Activated T-helper 1 cell treated with anti-CD3 and anti-CD28 coated beads, Interleukin-12 subunit alpha, Interleukin-12 subunit beta, Interleukin-2, Interleukin-4 antibody, amounts not matched to agents 30 ng/mL and 10 ng/mL and 1 ng/mL, durations not matched to agents 14 hours and 24 hours and 36 hours (primary cell): ENCODE measurements at regions of chr11 and their contacts with region 1.

Region 1: DNA sequence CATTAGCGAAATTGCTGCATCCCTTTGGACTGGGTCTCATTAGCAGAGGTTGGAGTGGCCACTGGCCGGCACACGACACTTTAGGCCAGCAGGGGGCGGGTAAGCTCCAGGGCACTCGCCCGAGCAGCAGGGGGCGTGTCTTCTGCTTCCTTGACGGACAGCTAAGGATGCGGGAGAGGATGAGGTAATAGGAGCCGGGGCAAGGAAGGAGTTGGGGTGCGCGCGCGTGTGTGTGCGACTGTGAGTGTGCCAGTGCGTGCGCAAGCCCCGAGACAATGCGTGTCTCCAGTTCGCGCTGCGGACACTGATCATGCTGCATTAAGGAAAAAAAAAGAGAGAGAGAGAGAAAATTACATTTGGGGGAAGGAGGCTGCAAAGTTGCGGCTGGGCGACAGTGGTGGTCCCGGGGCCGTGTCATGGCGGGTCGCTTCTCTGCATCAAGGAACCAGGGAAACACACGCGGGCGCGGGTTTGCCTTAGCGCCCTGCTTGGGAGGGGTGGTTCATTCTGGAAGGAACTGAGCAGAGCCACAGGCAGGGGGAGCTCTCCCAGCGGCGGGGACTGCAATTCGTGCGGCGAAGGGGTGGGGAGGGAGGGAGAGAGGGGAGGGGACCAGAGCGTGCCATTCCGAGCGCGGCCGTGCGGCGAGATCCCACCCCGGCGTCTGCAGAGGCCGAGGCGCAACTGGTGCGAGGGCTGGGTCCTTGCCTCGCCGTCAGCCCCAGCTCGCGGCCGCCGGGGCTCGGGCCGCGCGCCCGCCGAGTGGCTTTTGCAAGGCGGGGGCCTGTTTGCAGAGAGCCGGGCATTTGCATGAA is at the start of gene DTX4:
- DNase-seq: peak; percentile 84
- H3K4me3 Mint-ChIP-seq: peak within 1 kb of the TSS; percentile 85
- H3K27ac Mint-ChIP-seq: no peak within 1 kb of the TSS
- H3K4me1 Mint-ChIP-seq: peaks cover 8% of the 10 kb centered on the region
- H3K27me3 Mint-ChIP-seq: peaks cover 37% of the 10 kb centered on the region
- total RNA-seq, gene DTX4: 0.05 TPM in 2 replicates

Region 2: GRCh38 chr11:59106363-59107336 is 65.1 kb before region 1 on chr11 and contains the start of gene FAM111B:
- intact Hi-C with region 1: loop called (anchors 2 kb)
- DNase-seq: peak; percentile 73
- H3K4me3 Mint-ChIP-seq: peak within 1 kb of the TSS; percentile 93
- H3K27ac Mint-ChIP-seq: peak within 1 kb of the TSS; percentile 82
- H3K4me1 Mint-ChIP-seq: peaks cover 80% of the 10 kb centered on the region
- H3K27me3 Mint-ChIP-seq: no peaks in the 10 kb centered on the region
- total RNA-seq, gene FAM111B: 54.9 and 57.3 TPM in 2 replicates

Region 3: DNA sequence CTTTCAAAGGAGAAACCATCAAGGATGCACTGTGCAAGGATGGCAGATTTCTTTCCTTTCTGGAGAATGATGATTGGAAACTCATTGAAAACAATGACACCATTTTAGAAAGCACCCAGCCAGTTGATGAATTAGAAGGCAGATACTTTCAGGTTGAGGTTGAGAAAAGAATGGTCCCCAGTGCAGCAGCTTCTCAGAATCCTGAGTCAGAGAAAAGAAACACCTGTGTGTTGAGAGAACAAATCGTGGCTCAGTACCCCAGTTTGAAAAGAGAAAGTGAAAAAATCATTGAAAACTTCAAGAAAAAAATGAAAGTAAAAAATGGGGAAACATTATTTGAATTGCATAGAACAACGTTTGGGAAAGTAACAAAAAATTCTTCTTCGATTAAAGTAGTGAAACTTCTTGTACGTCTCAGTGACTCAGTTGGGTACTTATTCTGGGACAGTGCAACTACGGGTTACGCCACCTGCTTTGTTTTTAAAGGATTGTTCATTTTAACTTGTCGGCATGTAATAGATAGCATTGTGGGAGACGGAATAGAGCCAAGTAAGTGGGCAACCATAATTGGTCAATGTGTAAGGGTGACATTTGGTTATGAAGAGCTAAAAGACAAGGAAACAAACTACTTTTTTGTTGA is 19.3 kb before region 1 on chr11:
- intact Hi-C with region 1: loop called (anchors 1 kb)
- DNase-seq: no peak
- H3K4me3 Mint-ChIP-seq: peak overlapping the region; percentile 45
- H3K27ac Mint-ChIP-seq: peak overlapping the region; percentile 55
- H3K4me1 Mint-ChIP-seq: peaks cover 48% of the 10 kb centered on the region
- H3K27me3 Mint-ChIP-seq: no peaks in the 10 kb centered on the region

Region 4: DNA sequence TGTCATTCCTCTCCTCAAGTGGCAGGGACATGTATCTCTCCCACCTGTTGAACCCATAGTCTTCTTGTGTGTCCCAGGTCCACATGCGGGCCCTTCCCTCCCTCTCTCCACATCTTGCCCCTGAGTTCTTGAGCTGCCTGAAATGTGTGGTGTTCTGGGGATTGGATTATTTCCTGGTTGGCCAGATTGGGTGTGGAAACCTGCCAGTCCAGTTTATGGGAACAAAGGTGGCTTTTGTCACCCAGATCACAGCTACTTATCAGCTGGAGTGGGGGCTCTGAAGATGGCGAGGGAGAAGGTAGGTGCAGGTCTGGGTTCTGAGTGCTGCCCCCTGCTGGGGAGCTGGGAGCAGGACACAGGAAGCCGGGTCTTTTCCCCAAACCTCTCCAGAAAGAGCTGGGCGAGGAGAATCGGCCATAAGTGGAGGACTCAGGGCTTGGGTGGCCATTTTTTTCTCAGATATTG is 14.4 kb after region 1 on chr11:
- intact Hi-C with region 1: loop called (anchors 1 kb)
- DNase-seq: no peak
- H3K4me3 Mint-ChIP-seq: no peak overlapping the region
- H3K27ac Mint-ChIP-seq: no peak overlapping the region
- H3K4me1 Mint-ChIP-seq: no peaks in the 10 kb centered on the region
- H3K27me3 Mint-ChIP-seq: peaks cover 9% of the 10 kb centered on the region

Region 5: DNA sequence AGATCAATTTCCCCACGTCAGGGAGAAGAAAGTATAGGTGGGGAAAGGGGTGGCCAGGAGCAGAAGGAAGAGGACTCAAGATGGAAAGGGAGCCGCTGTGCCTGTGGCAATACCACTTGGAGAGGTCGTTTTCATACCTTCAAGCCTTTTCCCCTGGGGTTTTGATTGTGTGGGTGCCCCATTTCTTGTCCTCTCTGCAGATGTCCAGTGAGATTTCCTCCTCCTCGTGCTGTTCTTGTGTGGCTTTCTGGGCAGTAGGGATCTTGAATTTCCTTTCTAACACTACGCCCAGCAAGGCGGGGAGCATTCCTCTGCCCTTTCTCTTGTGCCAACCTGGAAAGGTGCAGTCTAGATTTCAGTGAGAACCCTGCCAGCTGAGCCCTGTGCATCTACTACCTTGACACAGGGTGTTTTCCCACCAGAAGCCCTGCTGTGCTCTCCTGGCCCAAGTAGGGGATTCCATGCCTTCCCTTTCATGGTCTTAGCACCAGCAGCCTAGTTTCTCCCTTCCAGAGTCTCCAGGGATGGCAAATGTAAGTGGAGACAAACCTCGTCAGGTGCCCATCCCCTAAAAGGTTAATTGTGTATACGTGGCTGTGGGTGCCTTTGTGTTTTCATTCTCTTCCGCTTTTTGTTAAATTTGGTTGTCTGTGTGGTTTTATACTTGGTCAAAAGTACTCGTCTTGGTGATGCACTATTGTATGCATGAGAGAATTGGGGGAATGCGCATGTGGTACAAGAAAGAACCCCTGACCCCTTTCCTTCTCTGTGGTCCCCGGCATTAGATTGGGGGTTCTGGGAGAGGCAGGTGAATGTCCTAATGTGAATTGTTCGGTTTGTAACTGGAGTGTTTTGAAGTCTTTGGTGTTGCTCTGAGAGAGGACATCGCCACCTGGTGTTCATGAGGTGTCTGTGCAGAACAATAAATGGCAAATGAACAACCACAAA is 112.4 kb after region 1 on chr11:
- intact Hi-C with region 1: loop called (anchors 1 kb)
- DNase-seq: peak; percentile 14
- H3K4me3 Mint-ChIP-seq: peak overlapping the region; percentile 70
- H3K27ac Mint-ChIP-seq: no peak overlapping the region
- H3K4me1 Mint-ChIP-seq: peaks cover 16% of the 10 kb centered on the region
- H3K27me3 Mint-ChIP-seq: peaks cover 8% of the 10 kb centered on the region

Region 6: DNA sequence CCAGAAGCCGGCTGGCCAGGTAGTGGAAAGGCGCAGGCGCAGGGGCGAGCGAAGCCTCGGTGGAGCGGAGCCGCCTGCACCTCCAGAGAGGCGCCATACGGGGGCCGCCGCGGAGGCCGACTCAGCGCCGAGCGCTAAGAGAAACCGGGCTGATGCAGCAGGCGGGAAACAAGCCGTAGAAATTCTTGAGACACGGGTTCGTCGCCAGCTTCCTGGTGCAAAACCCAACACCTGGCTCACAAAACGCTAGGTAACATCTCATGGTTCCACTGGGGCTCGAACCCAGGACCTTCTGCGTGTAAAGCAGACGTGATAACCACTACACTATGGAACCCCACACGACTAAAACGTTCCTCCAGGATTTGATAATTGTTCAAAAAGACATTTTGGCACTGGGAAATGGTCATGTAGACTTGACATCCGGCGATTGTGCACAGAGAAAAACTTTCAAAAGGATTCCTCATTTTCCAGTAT is 378.7 kb after region 1 on chr11:
- intact Hi-C with region 1: loop called (anchors 2 kb)
- DNase-seq: peak; percentile 82
- H3K4me3 Mint-ChIP-seq: peak overlapping the region; percentile 82
- H3K27ac Mint-ChIP-seq: peak overlapping the region; percentile 93
- H3K4me1 Mint-ChIP-seq: peaks cover 38% of the 10 kb centered on the region
- H3K27me3 Mint-ChIP-seq: peaks cover 19% of the 10 kb centered on the region

Region 7: GRCh38 chr11:59680287-59681154 is 508.8 kb after region 1 on chr11:
- intact Hi-C with region 1: loop called (anchors 1 kb)
- DNase-seq: peak; percentile 42
- H3K4me3 Mint-ChIP-seq: no peak overlapping the region
- H3K27ac Mint-ChIP-seq: no peak overlapping the region
- H3K4me1 Mint-ChIP-seq: no peaks in the 10 kb centered on the region
- H3K27me3 Mint-ChIP-seq: peaks cover 8% of the 10 kb centered on the region